Activated naive CD4-positive, alpha-beta T cell treated with anti-CD3 and anti-CD28 coated beads, Interleukin-2, amount 10 ng/mL, durations not matched to agents 7 days and 5 days (primary cell): ENCODE measurements at regions of chr16 and their contacts with region 1.

Region 1: GRCh38 chr16:4649744-4650442 is 25.3 kb downstream of the MGRN1 start:
- DNase-seq: peak; percentile 55
- H3K4me3 Mint-ChIP-seq: no peak overlapping the region
- H3K27ac Mint-ChIP-seq: peak overlapping the region; percentile 73
- H3K4me1 Mint-ChIP-seq: peaks cover 42% of the 10 kb centered on the region
- H3K27me3 Mint-ChIP-seq: peaks cover 5% of the 10 kb centered on the region

Region 2: DNA sequence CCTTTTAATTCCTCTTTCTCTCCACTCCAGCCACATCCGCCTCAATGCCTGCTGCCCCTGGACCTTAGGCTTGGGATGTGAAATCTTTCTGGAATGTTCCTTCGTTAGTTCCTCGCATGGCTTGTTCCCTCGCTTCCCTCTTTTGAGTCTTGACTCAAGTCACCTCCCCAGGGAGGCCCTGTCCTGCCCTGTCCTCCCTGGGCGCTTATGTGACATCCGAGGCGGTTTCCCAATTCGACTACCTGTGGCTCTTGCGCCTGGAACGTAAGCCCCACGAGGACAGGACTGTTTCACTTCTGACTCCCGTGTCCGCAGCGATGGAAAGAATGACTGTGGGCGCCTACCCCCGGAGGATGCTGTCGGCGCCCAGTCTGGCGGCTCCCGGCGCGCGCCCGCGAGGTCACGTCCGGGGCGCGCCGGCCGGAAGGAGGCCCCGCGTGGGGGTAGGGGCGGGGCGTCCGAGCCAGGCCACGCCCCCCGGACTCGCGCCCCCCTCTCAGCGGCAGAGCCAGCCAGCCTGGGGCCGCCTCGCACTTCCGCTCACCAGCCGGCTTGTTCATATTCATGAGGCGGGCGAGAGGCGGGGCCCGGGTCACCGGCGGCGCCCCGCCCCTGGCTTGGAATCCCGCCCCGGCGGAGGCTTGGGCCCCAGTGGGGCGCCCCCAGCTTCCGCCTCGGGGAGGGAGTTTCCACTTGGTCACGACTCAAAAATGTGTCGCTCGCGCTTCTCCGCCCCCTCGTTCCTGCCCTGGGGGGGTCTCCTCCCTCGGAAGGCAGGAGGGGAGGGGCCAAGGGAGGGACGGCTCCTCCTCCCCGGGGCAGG is 342.5 kb before region 1 on chr16:
- CTCF ChIA-PET with region 1: no interaction called
- DNase-seq: peak; percentile 97
- H3K4me3 Mint-ChIP-seq: peak overlapping the region; percentile 91
- H3K27ac Mint-ChIP-seq: peak overlapping the region; percentile 95
- H3K4me1 Mint-ChIP-seq: peaks cover 38% of the 10 kb centered on the region
- H3K27me3 Mint-ChIP-seq: peaks cover 28% of the 10 kb centered on the region

Region 3: DNA sequence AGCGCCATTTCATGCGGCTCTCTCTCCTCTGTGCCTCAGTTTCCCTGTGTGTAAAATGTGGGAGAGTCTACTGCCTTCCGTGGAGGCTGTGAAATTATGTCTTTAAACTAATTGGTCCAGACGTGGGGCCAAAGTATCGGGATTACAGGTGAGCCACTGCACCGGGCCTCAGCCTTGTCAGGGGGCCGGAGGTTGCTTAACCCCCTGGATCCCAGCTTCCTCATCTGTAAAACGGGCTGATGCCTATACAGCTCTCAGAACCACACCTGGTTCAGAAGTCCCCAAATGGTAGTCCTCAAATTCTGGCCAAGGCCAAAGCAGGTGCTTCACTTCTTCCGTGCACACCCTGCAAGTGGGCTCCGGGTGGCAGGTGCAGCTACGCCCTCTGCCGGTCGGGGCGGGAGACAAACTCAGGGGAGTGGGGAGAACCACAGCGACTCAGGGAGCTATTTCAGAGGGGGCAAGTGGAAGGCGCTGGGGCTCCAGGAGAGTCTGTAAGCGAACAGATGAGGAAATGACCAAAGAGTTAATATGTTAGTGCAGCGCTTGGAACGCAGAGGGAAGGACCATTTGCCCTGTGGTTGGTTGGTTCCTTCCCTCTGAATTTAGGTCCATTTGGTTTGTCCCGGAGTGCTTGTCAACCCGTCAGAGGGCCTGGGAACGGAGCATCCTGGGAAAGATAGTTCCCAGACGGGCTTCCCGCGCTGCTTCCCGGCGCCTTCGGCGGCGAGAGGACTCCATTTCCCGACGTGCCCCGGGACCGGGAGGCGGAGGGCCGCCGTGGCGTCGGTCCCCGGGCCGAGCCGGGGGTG is 25.7 kb before region 1 on chr16 and contains the start of gene MGRN1:
- CTCF ChIA-PET with region 1: interaction called, 11 read pairs
- DNase-seq: peak; percentile 96
- H3K4me3 Mint-ChIP-seq: peak within 1 kb of the TSS; percentile 98
- H3K27ac Mint-ChIP-seq: peak within 1 kb of the TSS; percentile 98
- H3K4me1 Mint-ChIP-seq: peaks cover 40% of the 10 kb centered on the region
- H3K27me3 Mint-ChIP-seq: no peaks in the 10 kb centered on the region

Region 4: DNA sequence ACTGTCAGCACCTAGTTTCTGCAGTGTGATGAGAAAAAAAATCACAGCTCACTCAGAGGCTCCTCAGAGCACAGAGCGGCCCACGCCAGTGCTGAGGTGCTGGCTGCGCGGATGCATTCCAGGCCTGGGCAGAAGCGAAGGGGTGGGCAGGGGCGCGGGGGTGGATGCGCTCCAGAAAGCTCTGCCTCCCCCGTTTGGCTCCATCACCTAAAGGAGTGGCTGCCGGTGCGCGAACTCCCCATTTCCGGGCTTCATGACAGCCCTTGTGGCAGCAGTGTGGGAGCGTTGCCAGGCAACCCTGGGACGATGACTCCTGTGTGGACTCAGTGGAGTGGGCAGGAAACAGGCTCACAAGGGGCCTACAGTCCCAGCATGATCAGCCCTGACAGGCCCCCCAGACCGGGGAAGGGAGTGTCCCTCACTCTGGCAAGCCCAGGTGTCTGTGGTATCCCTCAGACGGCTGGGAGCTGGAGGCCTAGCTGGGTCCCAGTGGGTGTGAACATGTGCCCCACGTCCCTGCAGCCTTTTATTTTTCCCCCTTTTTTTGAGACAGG is 10.6 kb after region 1 on chr16:
- CTCF ChIA-PET with region 1: interaction called, 15 read pairs
- DNase-seq: peak; percentile 82
- H3K4me3 Mint-ChIP-seq: no peak overlapping the region
- H3K27ac Mint-ChIP-seq: peak overlapping the region; percentile 85
- H3K4me1 Mint-ChIP-seq: peaks cover 69% of the 10 kb centered on the region
- H3K27me3 Mint-ChIP-seq: no peaks in the 10 kb centered on the region